A549 (cell line): ENCODE measurements at regions of chr11 and their contacts with region 1.

Region 1: GRCh38 chr11:125923012-125923579 is 18.8 kb downstream of the DDX25 start:
- DNase-seq: peak; percentile 65 to 71
- ATAC-seq: peak; percentile 92 to 95
- H3K4me3 ChIP-seq: no peak overlapping the region
- H3K27ac ChIP-seq: no peak overlapping the region
- H3K4me1 ChIP-seq: no peaks in the 10 kb centered on the region
- CTCF ChIP-seq: peak; percentile 84
- EP300 ChIP-seq: no peak
- POLR2A ChIP-seq: no peak
- RAD21 ChIP-seq: peak; percentile 87 to 89

Region 2: GRCh38 chr11:125874556-125875124 is 48.5 kb before region 1 on chr11:
- CTCF ChIA-PET with region 1: no interaction called
- POLR2A ChIA-PET with region 1: no interaction called
- DNase-seq: peak; percentile 25 to 56
- ATAC-seq: peak; percentile 90 to 98
- H3K4me3 ChIP-seq: no peak overlapping the region
- H3K27ac ChIP-seq: no peak overlapping the region
- H3K4me1 ChIP-seq: no peaks in the 10 kb centered on the region
- CTCF ChIP-seq: peak; percentile 62
- EP300 ChIP-seq: no peak
- POLR2A ChIP-seq: no peak
- RAD21 ChIP-seq: peak; percentile 69 to 80

Region 3: GRCh38 chr11:125892994-125893393 is 30.1 kb before region 1 on chr11:
- CTCF ChIA-PET with region 1: no interaction called
- POLR2A ChIA-PET with region 1: no interaction called
- DNase-seq: no peak
- ATAC-seq: no peak
- H3K4me3 ChIP-seq: peak overlapping the region; percentile 13; the same call in 1 of the 3 replicates
- H3K27ac ChIP-seq: peak overlapping the region; percentile 65 to 73
- H3K4me1 ChIP-seq: peaks cover 44% of the 10 kb centered on the region
- CTCF ChIP-seq: no peak
- EP300 ChIP-seq: no peak
- POLR2A ChIP-seq: no peak
- RAD21 ChIP-seq: no peak

Region 4: DNA sequence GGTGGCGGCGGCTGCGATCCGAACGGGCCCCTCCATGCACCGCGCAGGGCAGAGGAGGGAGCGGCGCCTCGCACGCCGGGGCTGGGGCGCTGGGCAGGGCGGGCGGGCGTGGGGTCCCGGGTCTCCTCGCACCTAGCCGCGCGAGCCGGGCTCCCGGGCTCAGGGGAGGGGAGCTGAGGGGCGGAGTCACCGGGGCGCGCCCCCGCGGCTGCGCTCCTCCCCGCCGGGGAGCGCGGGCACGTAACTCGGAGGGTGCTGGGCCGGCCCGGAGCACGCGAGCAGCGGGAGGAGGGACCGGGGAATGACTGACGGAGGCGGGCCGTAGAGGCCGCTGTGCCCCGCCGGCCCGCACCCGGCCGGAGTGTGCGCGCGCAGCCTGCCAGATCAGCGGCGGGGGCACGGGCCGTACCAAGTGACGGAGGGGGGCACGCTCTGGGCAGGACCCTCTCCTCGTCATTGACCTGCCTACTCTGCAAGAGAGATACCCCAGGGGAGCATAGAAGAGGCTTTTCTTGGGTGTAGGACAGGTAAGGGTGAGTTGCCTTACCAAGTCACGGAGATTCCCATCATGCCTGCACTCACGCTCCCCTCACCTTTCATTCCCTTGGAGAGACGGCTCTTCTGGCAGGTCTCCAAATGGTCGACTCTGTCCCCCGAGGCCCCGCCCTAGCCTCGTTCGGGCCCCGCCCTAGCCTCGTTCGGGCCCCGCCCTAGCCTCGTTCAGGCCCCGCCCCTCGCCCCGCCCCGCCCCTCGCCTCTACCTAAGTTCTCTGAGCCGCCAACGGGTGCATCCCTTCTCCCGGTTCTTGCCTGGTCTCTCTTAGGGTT is 139.8 kb after region 1 on chr11 and contains the start of gene CDON:
- CTCF ChIA-PET with region 1: interaction called, 11 read pairs
- POLR2A ChIA-PET with region 1: no interaction called
- DNase-seq: peak; percentile 90 to 95
- ATAC-seq: peak; percentile 92 to 96
- H3K4me3 ChIP-seq: peak within 1 kb of the TSS; percentile 87
- H3K27ac ChIP-seq: peak within 1 kb of the TSS; percentile 92
- H3K4me1 ChIP-seq: peaks cover 16% of the 10 kb centered on the region
- CTCF ChIP-seq: no peak
- EP300 ChIP-seq: no peak
- POLR2A ChIP-seq: no peak
- RAD21 ChIP-seq: 0 out of 5 replicates have a peak, but pooled peaks of 1 of the 2 experiments have one; percentile 12
- polyA plus RNA-seq, gene CDON: 5.6 and 7.8 TPM in 2 replicates

Region 5: GRCh38 chr11:126194121-126194543 is 271.0 kb after region 1 on chr11:
- CTCF ChIA-PET with region 1: interaction called, 80 read pairs
- POLR2A ChIA-PET with region 1: no interaction called
- DNase-seq: peak; percentile 37 to 55
- ATAC-seq: peak; percentile 69 to 91; a peak in 5 of 6 replicates
- H3K4me3 ChIP-seq: no peak overlapping the region
- H3K27ac ChIP-seq: no peak overlapping the region
- H3K4me1 ChIP-seq: no peaks in the 10 kb centered on the region
- CTCF ChIP-seq: peak; percentile 77
- EP300 ChIP-seq: no peak
- POLR2A ChIP-seq: no peak
- RAD21 ChIP-seq: peak; percentile 86